ENCODE measurements at regions of chr1 and their contacts with region 1.

Region 1: DNA sequence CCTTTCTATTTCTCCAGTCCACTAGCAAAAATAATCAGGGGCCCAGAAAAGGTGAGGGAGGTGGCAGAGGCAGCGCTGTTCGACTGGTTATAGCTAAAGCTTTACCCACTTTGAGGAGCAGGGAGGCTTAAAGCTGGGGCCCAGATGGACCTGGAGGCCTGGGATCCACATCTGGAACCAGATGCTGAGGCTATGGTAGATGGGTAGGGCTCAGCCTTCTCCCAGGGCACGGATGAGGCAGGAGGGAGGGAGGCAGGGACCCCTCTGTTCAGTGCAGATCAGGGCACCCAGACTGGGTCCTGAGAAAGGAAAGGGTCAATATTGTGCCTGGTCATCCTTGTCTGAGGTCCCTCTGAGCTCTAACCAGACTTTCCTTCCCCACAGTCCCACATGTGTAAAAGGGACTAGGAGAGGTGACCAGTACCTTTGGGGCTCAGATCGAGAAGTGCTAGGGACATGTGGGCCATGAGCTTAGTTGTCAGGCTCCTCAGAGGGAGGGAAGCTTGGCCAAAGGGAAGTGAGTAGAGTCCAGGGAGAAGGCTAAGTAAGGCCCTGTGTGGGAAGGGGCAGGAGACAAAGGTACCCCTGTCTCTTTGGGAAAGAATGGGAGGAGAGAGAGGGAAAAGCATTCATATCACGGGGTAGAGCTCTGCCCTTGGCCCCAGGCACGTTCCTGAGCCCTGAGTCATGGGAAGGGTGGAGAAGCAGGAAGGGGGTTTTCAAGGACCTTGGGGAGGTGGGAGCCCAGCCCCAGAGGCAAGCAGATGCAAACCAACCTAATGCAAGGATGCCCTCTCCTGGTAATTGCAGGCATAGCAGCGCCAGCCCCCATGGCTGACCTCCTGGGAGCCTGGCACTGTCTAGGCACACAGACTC is 15.4 kb downstream of the LMNA start:
- DNase-seq: peak; percentile 90

Region 2: DNA sequence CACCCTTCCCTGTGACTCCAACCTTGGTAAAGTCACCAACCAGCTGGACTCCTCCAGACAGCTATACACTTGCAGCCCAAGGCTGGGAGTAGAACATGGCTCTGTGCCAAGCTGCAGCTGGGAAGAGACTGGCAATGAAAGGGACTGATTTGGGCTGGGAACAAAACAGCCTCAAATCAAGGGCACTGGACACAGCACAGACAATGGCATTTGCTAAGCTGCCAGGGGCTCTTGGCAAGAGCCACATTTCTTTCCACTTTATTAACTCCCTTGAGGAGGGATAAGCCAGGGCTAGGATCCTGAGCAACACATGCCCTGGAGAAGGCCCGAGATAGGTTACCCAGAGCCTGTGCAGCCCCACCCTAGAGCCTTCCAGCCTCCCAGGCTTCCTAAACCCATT is 258.6 kb before region 1 on chr1:
- CTCF ChIA-PET with region 1: no interaction called
- POLR2A ChIA-PET with region 1: no interaction called
- DNase-seq: no peak

Region 3: GRCh38 chr1:156082309-156083091 is 47.4 kb before region 1 on chr1 and contains the start of gene MEX3A:
- CTCF ChIA-PET with region 1: interaction called, 6 read pairs
- POLR2A ChIA-PET with region 1: interaction called, 15 read pairs
- DNase-seq: peak; percentile 88

Region 4: GRCh38 chr1:156096640-156097391 is 33.1 kb before region 1 on chr1:
- CTCF ChIA-PET with region 1: interaction called, 255 read pairs
- POLR2A ChIA-PET with region 1: interaction called, 32 read pairs
- DNase-seq: peak; percentile 92

Region 5: GRCh38 chr1:156104065-156104810 is 25.7 kb before region 1 on chr1:
- CTCF ChIA-PET with region 1: interaction called, 255 read pairs
- POLR2A ChIA-PET with region 1: interaction called, 32 read pairs
- DNase-seq: no peak

Region 6: DNA sequence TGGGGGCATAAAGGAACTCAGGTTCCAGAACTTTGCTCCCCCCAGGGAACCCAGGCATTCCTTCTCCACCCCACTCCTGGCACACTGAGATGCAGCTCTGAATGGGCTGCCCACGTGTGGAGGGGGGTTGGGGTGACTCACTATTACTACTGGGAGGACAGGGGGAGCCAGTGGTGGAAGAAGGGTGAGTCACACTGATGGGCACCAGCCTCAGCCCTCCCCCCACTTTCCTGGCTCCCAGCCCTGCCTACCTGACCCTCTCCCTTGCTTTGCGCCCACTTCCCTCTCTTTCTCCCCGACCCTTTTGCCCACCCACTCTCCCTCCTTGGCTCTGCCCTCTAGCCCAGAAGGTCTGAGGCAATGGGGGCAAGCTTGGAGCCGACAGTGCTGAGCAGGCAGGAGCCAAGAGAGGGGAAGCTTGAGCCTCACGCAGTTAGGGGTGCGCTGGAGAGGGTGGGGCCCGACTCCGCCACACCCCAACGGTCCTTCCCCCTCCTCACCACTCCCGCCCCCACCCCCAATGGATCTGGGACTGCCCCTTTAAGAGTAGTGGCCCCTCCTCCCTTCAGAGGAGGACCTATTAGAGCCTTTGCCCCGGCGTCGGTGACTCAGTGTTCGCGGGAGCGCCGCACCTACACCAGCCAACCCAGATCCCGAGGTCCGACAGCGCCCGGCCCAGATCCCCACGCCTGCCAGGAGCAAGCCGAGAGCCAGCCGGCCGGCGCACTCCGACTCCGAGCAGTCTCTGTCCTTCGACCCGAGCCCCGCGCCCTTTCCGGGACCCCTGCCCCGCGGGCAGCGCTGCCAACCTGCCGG is 15.6 kb before region 1 on chr1 and contains the start of gene LMNA:
- CTCF ChIA-PET with region 1: interaction called, 24 read pairs
- POLR2A ChIA-PET with region 1: interaction called, 8 read pairs
- DNase-seq: peak; percentile 87

Region 7: GRCh38 chr1:156140879-156141252 is 10.9 kb after region 1 on chr1:
- CTCF ChIA-PET with region 1: interaction called, 16 read pairs
- POLR2A ChIA-PET with region 1: no interaction called
- DNase-seq: no peak

Measured in HEK293T (cell line).